Activated B cell treated with CpG ODN at 0.5 μM for 24 hours (primary cell): ENCODE measurements at regions of chr19 and their contacts with region 1.

Region 1: GRCh38 chr19:3626473-3627350 is at the start of gene CACTIN:
- DNase-seq: peak; percentile 95
- ATAC-seq: peak; percentile 98
- H3K4me3 Mint-ChIP-seq: peak within 1 kb of the TSS; percentile 97
- H3K27ac Mint-ChIP-seq: peak within 1 kb of the TSS; percentile 99
- H3K4me1 Mint-ChIP-seq: peaks cover 30% of the 10 kb centered on the region
- H3K27me3 Mint-ChIP-seq: no peaks in the 10 kb centered on the region
- CTCF ChIP-seq: no peak
- total RNA-seq, gene CACTIN: 45.3 and 48.1 TPM in 2 replicates

Region 2: GRCh38 chr19:3557461-3558248 is 69.1 kb before region 1 on chr19 and contains the start of gene MFSD12:
- CTCF ChIA-PET with region 1: no interaction called
- POLR2A ChIA-PET with region 1: interaction called, 3 read pairs
- intact Hi-C with region 1: loop called (anchors 2 kb)
- DNase-seq: peak; percentile 94
- ATAC-seq: peak; percentile 86
- H3K4me3 Mint-ChIP-seq: peak within 1 kb of the TSS; percentile 89
- H3K27ac Mint-ChIP-seq: peak within 1 kb of the TSS; percentile 86
- H3K4me1 Mint-ChIP-seq: peaks cover 57% of the 10 kb centered on the region
- H3K27me3 Mint-ChIP-seq: no peaks in the 10 kb centered on the region
- CTCF ChIP-seq: no peak
- total RNA-seq, gene MFSD12: 59.2 and 76.9 TPM in 2 replicates

Region 3: GRCh38 chr19:3586124-3586626 is 40.5 kb before region 1 on chr19:
- CTCF ChIA-PET with region 1: no interaction called
- POLR2A ChIA-PET with region 1: no interaction called
- intact Hi-C with region 1: no loop called
- DNase-seq: peak; percentile 46
- ATAC-seq: peak; percentile 45
- H3K4me3 Mint-ChIP-seq: peak overlapping the region; percentile 48
- H3K27ac Mint-ChIP-seq: no peak overlapping the region
- H3K4me1 Mint-ChIP-seq: no peaks in the 10 kb centered on the region
- H3K27me3 Mint-ChIP-seq: peaks cover 2% of the 10 kb centered on the region
- CTCF ChIP-seq: peak; percentile 45

Region 4: GRCh38 chr19:3700221-3701032 is 73.7 kb after region 1 on chr19 and contains the start of gene PIP5K1C:
- CTCF ChIA-PET with region 1: no interaction called
- POLR2A ChIA-PET with region 1: no interaction called
- intact Hi-C with region 1: loop called (anchors 2 kb)
- DNase-seq: peak; percentile 96
- ATAC-seq: peak; percentile 98
- H3K4me3 Mint-ChIP-seq: peak within 1 kb of the TSS; percentile 89
- H3K27ac Mint-ChIP-seq: peak within 1 kb of the TSS; percentile 65
- H3K4me1 Mint-ChIP-seq: peaks cover 37% of the 10 kb centered on the region
- H3K27me3 Mint-ChIP-seq: no peaks in the 10 kb centered on the region
- CTCF ChIP-seq: no peak
- total RNA-seq, gene PIP5K1C: 28.3 and 31.1 TPM in 2 replicates

Region 5: GRCh38 chr19:3970808-3971598 is 344.3 kb after region 1 on chr19 and contains the start of gene DAPK3:
- CTCF ChIA-PET with region 1: no interaction called
- POLR2A ChIA-PET with region 1: no interaction called
- intact Hi-C with region 1: loop called (anchors 2 kb)
- DNase-seq: peak; percentile 94
- ATAC-seq: peak; percentile 97
- H3K4me3 Mint-ChIP-seq: peak within 1 kb of the TSS; percentile 88
- H3K27ac Mint-ChIP-seq: peak within 1 kb of the TSS; percentile 84
- H3K4me1 Mint-ChIP-seq: peaks cover 27% of the 10 kb centered on the region
- H3K27me3 Mint-ChIP-seq: no peaks in the 10 kb centered on the region
- CTCF ChIP-seq: no peak
- total RNA-seq, gene DAPK3: 37.5 and 42.2 TPM in 2 replicates

Region 6: GRCh38 chr19:4035582-4035981 is 408.9 kb after region 1 on chr19:
- CTCF ChIA-PET with region 1: no interaction called
- POLR2A ChIA-PET with region 1: no interaction called
- intact Hi-C with region 1: no loop called
- DNase-seq: no peak
- ATAC-seq: no peak
- H3K4me3 Mint-ChIP-seq: no peak overlapping the region
- H3K27ac Mint-ChIP-seq: no peak overlapping the region
- H3K4me1 Mint-ChIP-seq: peaks cover 2% of the 10 kb centered on the region
- H3K27me3 Mint-ChIP-seq: no peaks in the 10 kb centered on the region
- CTCF ChIP-seq: no peak